Right ventricle myocardium inferior (tissue), 1 donor: ENCODE measurements at regions of chr2 and their contacts with region 1.

Region 1: GRCh38 chr2:54206596-54206995 is 49.4 kb downstream of the TSPYL6 start:
- DNase-seq: no peak
- ATAC-seq: no peak

Region 2: GRCh38 chr2:53867169-53867568 is 339.4 kb before region 1 on chr2:
- intact Hi-C with region 1: no loop called
- DNase-seq: no peak
- ATAC-seq: no peak

Region 3: DNA sequence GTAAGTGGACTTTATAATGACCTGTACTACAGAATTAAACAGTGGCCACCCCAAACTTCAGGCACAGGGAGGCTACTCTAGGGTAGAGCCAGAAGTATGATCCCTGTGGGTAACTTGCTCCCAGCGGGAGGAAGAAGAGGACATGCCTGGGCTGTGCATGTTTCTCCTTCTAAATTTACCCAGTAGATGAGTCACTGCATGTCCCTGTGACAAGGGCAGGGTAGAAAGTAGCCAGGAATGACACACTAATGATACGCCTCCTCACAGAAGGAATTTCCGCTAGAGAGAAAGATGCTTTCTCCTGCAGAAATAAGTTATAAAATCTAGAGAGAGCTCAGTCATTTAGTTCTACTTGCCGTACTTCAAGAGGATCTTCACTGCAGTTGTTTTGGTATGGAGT is 83.7 kb before region 1 on chr2:
- intact Hi-C with region 1: no loop called
- DNase-seq: no peak
- ATAC-seq: peak; percentile 92

Region 4: GRCh38 chr2:54330162-54330925 is 123.7 kb after region 1 on chr2:
- intact Hi-C with region 1: loop called (anchors 5 kb)
- DNase-seq: peak; percentile 97
- ATAC-seq: peak; percentile 99

Region 5: DNA sequence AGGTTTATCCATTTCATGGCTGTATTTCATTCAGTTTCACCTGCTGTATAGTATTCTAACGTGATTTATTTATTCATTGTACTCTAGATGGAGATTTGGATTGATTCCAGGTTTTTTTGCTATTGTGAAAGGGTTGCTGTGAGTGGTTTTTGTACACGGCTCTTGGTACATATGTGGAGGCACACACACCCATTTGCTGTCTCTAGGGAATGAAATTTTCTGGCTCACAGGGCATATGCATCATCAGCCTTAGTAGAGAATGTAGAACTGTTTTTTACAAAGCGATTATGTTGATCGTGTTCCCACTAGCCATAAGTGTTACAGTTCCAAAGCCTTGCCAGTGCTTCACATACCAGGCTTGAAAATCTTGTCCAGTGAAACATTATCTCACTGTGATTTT is 254.7 kb after region 1 on chr2:
- intact Hi-C with region 1: loop called (anchors 2 kb)
- DNase-seq: no peak
- ATAC-seq: peak; percentile 44